Right cardiac atrium (tissue), 5 donors: ENCODE measurements at regions of chr4 and their contacts with region 1.

Region 1: GRCh38 chr4:52376132-52376704 is 282.9 kb downstream of the USP46 start:
- DNase-seq: no peak
- ATAC-seq: no peak
- H3K4me3 ChIP-seq: no peak overlapping the region
- H3K27ac ChIP-seq: no peak overlapping the region
- H3K4me1 ChIP-seq: no peaks in the 10 kb centered on the region
- H3K27me3 ChIP-seq: no peaks in the 10 kb centered on the region

Region 2: DNA sequence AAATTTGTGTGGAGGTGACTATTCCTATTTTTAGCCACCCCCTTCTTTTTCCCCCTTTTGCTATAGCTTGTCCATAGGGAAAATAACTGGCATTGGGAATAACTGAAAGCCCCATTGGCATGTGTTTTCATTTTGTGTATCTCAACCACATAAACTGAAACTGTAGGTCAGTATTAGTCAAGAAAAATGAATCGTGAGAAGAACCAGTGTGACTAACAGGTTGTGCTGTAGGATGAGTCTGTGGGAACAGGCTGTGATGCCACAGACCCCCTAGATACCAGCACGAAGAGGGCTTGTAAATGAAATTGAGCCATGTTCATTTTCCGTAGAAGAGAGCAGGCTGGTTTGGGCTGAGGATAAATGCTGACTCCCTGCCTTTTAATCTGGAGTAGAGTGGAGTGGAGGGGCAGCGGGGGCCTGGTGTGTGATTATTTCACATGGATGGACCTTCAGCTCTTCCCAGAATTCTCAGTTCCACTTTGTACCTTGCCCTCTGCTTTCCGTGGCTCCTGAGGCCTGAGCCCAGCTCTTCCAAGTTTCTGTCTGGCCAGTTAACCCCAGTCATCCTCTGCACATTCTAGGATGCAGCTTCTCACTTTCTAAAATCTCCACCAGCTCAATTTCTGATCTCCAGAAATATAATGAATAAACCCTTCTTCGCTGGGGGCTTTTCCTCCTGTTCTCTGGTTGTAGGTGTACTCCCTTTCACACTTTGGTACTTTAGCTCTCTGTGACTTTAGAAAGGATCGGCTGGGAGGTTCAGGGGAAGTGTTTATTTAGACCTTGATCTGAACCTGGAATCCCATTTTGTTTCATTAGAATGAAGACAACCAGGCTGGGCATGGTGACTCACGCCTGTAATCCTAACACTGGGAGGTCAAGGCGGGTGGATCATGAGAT is 496.0 kb before region 1 on chr4:
- intact Hi-C with region 1: no loop called
- DNase-seq: no peak
- ATAC-seq: no peak
- H3K4me3 ChIP-seq: no peak overlapping the region
- H3K27ac ChIP-seq: no peak overlapping the region
- H3K4me1 ChIP-seq: peaks cover 2% of the 10 kb centered on the region
- H3K27me3 ChIP-seq: no peaks in the 10 kb centered on the region

Region 3: GRCh38 chr4:52244848-52245247 is 131.4 kb before region 1 on chr4:
- intact Hi-C with region 1: loop called in 1 of 4 experiments (anchors 10 kb)
- DNase-seq: no peak
- ATAC-seq: peak; percentile 75 to 92
- H3K4me3 ChIP-seq: no peak overlapping the region
- H3K27ac ChIP-seq: no peak overlapping the region
- H3K4me1 ChIP-seq: no peaks in the 10 kb centered on the region
- H3K27me3 ChIP-seq: no peaks in the 10 kb centered on the region